ENCODE measurements at regions of chr18 and their contacts with region 1.

Region 1: DNA sequence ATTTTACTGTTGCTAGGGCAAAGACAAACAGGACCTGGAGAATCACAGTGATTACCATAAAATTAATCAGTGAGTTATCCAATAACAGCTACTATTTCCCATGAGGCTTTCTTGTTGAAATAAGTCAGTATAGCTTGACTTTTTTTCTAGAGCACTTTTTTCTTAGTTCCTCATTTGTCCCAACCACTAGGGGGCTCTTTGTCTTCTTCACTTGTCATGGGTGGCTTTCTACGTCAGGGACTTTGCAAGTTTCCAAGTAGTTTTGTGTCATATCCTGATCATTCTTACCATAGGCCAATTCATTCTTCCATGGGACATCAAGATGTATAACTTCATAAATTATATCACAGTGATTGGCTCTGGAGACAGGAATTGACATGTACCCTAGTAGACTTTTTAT is 1019.6 kb upstream of the PIK3C3 start:
- DNase-seq: no peak
- ATAC-seq: no peak
- H3K4me3 ChIP-seq: no peak overlapping the region
- H3K27ac ChIP-seq: no peak overlapping the region
- H3K4me1 ChIP-seq: no peaks in the 10 kb centered on the region
- H3K27me3 ChIP-seq: peaks cover 0 to 2% (median 0%) of the 10 kb centered on the region in 3 donors
- CTCF ChIP-seq: no peak

Region 2: GRCh38 chr18:40995529-40995928 is 60.1 kb after region 1 on chr18:
- intact Hi-C with region 1: no loop called
- DNase-seq: no peak
- ATAC-seq: no peak
- H3K4me3 ChIP-seq: no peak overlapping the region
- H3K27ac ChIP-seq: no peak overlapping the region
- H3K4me1 ChIP-seq: no peaks in the 10 kb centered on the region
- H3K27me3 ChIP-seq: no peaks in the 10 kb centered on the region
- CTCF ChIP-seq: no peak

Region 3: GRCh38 chr18:41391616-41392595 is 456.5 kb after region 1 on chr18:
- intact Hi-C with region 1: loop called in 1 of 2 experiments (anchors 5 kb)
- DNase-seq: peak; percentile 12 to 45
- ATAC-seq: no peak
- H3K4me3 ChIP-seq: no peak overlapping the region
- H3K27ac ChIP-seq: no peak overlapping the region
- H3K4me1 ChIP-seq: no peaks in the 10 kb centered on the region
- H3K27me3 ChIP-seq: no peaks in the 10 kb centered on the region
- CTCF ChIP-seq: peak; percentile 28